ENCODE measurements at regions of chr6 and their contacts with region 1.

Region 1: GRCh38 chr6:149935668-149936067 is 6.1 kb upstream of the ULBP2 start:
- DNase-seq: peak in 1 of 2 donors; percentile 80
- H3K4me3 ChIP-seq: no peak overlapping the region
- H3K27ac ChIP-seq: no peak overlapping the region
- H3K4me1 ChIP-seq: peaks cover 14% of the 10 kb centered on the region
- H3K27me3 ChIP-seq: peaks cover 15% of the 10 kb centered on the region
- CTCF ChIP-seq: no peak
- POLR2A ChIP-seq: no peak

Region 2: DNA sequence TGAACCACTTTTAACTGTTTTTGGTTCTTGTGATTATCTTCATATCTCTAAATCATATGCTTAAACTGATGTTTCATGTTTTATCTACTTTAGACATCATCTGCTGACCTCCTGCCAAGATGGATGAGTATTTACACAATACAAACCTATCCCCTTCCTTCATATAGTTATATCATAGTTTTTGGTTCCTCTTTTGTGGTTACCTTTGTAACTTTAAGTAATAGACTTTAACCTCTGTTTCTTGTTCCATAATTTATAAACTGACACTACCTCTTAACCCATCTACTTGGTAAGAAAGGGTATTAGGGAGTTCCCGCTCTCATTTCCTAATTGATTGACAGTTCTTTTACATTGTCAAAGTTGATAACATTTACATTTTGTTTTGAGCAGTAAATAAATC is 174.2 kb before region 1 on chr6:
- intact Hi-C with region 1: no loop called
- DNase-seq: no peak
- H3K4me3 ChIP-seq: no peak overlapping the region
- H3K27ac ChIP-seq: no peak overlapping the region
- H3K4me1 ChIP-seq: no peaks in the 10 kb centered on the region
- H3K27me3 ChIP-seq: no peaks in the 10 kb centered on the region
- CTCF ChIP-seq: no peak
- POLR2A ChIP-seq: no peak

Region 3: DNA sequence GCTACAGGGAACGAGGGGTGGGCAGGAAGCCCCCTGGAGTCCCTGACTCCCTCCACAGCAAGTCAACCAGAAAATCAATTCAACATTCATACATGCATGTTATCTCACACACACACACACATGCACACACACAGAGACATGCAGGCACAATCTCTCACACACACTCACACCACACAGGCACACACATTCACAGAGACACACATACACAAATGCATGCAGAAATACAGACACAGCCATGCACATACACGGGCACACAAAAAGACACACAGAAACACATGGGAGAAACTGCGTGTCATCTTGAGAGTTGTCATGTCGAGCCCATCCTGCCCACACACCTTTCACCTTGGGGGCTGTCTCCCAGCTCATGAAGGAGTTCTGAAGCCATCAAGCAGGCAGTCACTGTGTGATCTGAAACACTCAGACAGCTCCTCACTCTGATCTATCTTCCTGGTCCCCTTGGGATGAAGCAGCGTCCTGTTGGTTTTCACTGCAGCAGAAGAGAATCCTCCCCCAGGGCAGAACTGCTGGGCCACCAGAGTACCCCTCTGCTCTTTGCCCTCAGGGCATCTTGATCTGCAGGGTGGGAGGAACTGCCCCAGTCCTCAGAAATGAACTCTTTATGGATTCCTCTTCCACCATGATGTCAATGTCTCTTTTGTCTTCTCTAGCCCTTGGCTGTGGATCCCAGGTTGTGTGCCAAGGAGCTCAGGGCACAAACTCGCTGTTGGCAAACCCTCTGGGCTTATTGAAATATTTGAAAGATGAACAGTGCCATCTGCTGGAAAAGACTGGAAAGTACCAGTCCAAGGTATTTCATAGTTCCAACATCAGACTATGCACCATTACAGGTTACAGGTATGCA is 80.9 kb after region 1 on chr6:
- intact Hi-C with region 1: loop called (anchors 1 kb)
- DNase-seq: peak in 1 of 2 donors; percentile 46
- H3K4me3 ChIP-seq: no peak overlapping the region
- H3K27ac ChIP-seq: no peak overlapping the region
- H3K4me1 ChIP-seq: peaks cover 15% of the 10 kb centered on the region
- H3K27me3 ChIP-seq: peaks cover 4% of the 10 kb centered on the region
- CTCF ChIP-seq: peak; percentile 47 to 64 (median 50)
- POLR2A ChIP-seq: no peak

Region 4: GRCh38 chr6:150091476-150091875 is 155.8 kb after region 1 on chr6:
- intact Hi-C with region 1: no loop called
- DNase-seq: no peak
- H3K4me3 ChIP-seq: no peak overlapping the region
- H3K27ac ChIP-seq: no peak overlapping the region
- H3K4me1 ChIP-seq: no peaks in the 10 kb centered on the region
- H3K27me3 ChIP-seq: no peaks in the 10 kb centered on the region
- CTCF ChIP-seq: no peak
- POLR2A ChIP-seq: no peak